ENCODE measurements at regions of chr2 and their contacts with region 1.

Region 1: GRCh38 chr2:229714736-229715541 is 584 bp upstream of the DNER start:
- DNase-seq: peak; percentile 56
- H3K4me3 ChIP-seq: peak overlapping the region; percentile 40 to 51 (median 45)
- H3K27ac ChIP-seq: no peak overlapping the region
- H3K4me1 ChIP-seq: peaks cover 20% of the 10 kb centered on the region
- H3K27me3 ChIP-seq: peaks cover 31% of the 10 kb centered on the region
- CTCF ChIP-seq: no peak

Region 2: DNA sequence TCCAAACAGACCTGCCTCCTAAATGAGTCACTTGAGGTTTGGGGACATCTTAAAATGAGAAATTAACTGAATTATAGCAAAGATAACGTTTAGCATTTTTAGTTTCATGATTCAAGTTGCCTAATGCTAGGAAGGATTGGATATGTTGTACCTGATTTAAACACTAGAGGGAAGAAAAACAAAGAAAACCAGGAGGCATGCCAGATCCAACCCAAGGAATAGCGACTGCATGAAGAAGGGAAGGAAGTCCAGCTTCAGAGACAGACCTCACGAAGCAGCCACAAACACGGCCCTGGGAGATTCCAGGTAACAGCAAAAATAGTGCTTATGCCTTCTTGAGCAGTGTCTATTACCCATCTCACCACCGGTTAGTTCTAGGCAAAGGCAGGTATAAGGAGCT is 1033.5 kb before region 1 on chr2:
- CTCF ChIA-PET with region 1: no interaction called
- dilution Hi-C with region 1: no loop called
- in situ Hi-C with region 1: no loop called
- intact Hi-C with region 1: loop called (anchors 10 kb)
- DNase-seq: peak; percentile 42
- H3K4me3 ChIP-seq: no peak overlapping the region
- H3K27ac ChIP-seq: no peak overlapping the region
- H3K4me1 ChIP-seq: no peaks in the 10 kb centered on the region
- H3K27me3 ChIP-seq: peaks cover 3% of the 10 kb centered on the region
- CTCF ChIP-seq: peak; percentile 49 to 60

Region 3: DNA sequence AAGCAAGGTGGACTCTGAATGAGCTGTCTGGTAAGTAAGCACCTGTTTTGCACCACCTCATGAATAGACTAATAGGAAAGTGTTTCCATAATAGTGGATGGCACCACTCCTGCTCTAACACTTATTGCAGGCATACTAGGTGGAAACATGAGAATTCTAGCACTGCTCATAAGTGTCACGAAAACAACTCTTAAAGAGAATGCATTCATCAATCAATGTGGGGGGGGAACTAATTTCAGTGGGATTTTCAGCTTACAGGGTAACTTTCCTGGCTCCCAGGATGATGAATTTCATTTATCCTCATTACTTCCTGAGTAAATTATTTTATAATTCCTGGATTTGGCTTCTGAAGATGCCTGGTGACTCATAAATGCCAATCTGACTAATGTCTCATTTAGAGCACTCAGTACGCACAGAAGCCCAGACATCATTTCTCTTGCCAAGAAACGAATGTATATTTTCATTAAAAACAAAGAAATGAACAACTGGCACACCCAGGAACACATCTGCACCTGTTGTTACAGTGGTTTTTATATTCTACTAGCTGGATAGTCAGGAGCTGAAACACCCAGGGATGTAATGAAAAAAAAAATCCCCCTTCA is 573.4 kb before region 1 on chr2:
- CTCF ChIA-PET with region 1: no interaction called
- dilution Hi-C with region 1: no loop called
- in situ Hi-C with region 1: no loop called
- intact Hi-C with region 1: no loop called
- DNase-seq: peak; percentile 52
- H3K4me3 ChIP-seq: no peak overlapping the region
- H3K27ac ChIP-seq: no peak overlapping the region
- H3K4me1 ChIP-seq: no peaks in the 10 kb centered on the region
- H3K27me3 ChIP-seq: no peaks in the 10 kb centered on the region
- CTCF ChIP-seq: no peak

Region 4: GRCh38 chr2:229342376-229342775 is 372.6 kb before region 1 on chr2:
- CTCF ChIA-PET with region 1: no interaction called
- dilution Hi-C with region 1: loop called (anchors 25 kb)
- in situ Hi-C with region 1: no loop called
- intact Hi-C with region 1: loop called (anchors 5 kb)
- DNase-seq: peak; percentile 55
- H3K4me3 ChIP-seq: no peak overlapping the region
- H3K27ac ChIP-seq: no peak overlapping the region
- H3K4me1 ChIP-seq: peaks cover 12% of the 10 kb centered on the region
- H3K27me3 ChIP-seq: no peaks in the 10 kb centered on the region
- CTCF ChIP-seq: peak; percentile 69 to 73

Region 5: DNA sequence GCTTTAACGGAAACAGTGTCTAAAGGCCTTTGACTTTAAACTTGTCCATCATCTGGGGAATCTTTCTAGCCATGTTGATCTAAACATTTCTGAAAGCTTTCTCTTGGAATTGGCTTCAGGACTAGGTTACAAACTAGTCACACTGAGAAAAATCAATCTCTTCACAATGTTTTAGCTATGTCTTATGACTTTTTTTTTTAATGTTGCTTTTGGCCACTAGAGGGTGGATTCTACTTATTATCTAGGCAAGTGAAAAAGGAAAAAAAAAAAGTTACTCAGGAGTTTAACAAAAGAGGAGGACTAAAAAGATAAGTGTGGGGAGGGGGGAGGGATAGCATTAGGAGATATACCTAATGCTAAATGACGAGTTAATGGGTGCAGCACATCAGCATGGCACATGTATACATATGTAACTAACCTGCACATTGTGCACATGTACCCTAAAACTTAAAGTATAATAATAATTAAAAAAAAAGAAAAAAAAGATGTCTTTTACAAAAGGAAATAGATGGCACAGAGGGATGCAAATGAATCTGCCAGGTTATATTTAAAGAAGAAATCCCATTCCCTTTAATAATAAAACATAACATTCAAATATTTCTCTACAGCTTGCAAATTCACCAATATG is 283.5 kb before region 1 on chr2:
- CTCF ChIA-PET with region 1: no interaction called
- dilution Hi-C with region 1: no loop called
- in situ Hi-C with region 1: no loop called
- intact Hi-C with region 1: loop called (anchors 1 kb)
- DNase-seq: peak; percentile 56
- H3K4me3 ChIP-seq: no peak overlapping the region
- H3K27ac ChIP-seq: no peak overlapping the region
- H3K4me1 ChIP-seq: no peaks in the 10 kb centered on the region
- H3K27me3 ChIP-seq: no peaks in the 10 kb centered on the region
- CTCF ChIP-seq: peak; percentile 51 to 64

Region 6: GRCh38 chr2:229601396-229601795 is 113.5 kb before region 1 on chr2:
- CTCF ChIA-PET with region 1: no interaction called
- dilution Hi-C with region 1: no loop called
- in situ Hi-C with region 1: no loop called
- intact Hi-C with region 1: no loop called
- DNase-seq: peak; percentile 42
- H3K4me3 ChIP-seq: no peak overlapping the region
- H3K27ac ChIP-seq: no peak overlapping the region
- H3K4me1 ChIP-seq: peaks cover 10% of the 10 kb centered on the region
- H3K27me3 ChIP-seq: no peaks in the 10 kb centered on the region
- CTCF ChIP-seq: no peak